ENCODE measurements at regions of chr4 and their contacts with region 1.

Region 1: DNA sequence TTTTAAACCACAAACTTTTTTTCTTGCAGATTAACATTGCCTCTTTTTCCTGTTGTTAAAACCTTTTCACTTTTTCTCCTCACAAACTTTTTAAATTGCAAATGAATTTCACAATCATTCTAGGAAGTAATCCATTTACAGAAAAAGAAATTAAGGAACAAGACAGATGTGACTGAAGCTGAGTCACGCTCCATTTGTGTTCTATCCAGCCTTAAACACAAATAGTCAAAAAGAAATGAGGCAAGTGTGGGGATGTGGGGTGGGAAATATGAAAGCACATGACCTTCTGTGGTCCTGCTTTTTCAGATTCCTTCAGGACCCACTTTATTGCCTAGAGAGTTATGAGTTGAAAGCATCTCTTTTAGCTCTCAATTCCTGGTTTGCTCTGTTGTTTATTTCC is 197.0 kb downstream of the ADGRL3 start:
- DNase-seq: peak; percentile 16
- H3K4me3 ChIP-seq: no peak overlapping the region
- H3K27ac ChIP-seq: no peak overlapping the region
- H3K4me1 ChIP-seq: peaks cover 4% of the 10 kb centered on the region
- H3K27me3 ChIP-seq: no peaks in the 10 kb centered on the region
- CTCF ChIP-seq: no peak

Region 2: GRCh38 chr4:61443813-61444510 is 46.8 kb after region 1 on chr4:
- CTCF ChIA-PET with region 1: no interaction called
- dilution Hi-C with region 1: no loop called
- in situ Hi-C with region 1: no loop called
- intact Hi-C with region 1: loop called (anchors 5 kb)
- DNase-seq: peak; percentile 64
- H3K4me3 ChIP-seq: peak overlapping the region in 2 of 3 experiments; percentile 2 to 9
- H3K27ac ChIP-seq: peak overlapping the region; percentile 59
- H3K4me1 ChIP-seq: peaks cover 14% of the 10 kb centered on the region
- H3K27me3 ChIP-seq: no peaks in the 10 kb centered on the region
- CTCF ChIP-seq: no peak